Dorsolateral prefrontal cortex (tissue), 120 donors: ENCODE measurements at regions of chr1 and their contacts with region 1.

Region 1: GRCh38 chr1:229625915-229626831 is at the starts of genes TAF5L and URB2:
- DNase-seq: peak; percentile 75 to 96 (median 88)
- H3K4me3 ChIP-seq: peak within 1 kb of the TSS; percentile 74 to 100 (median 95)
- H3K27ac ChIP-seq: peak within 1 kb of the TSS in 57 of 59 donors; percentile 41 to 95 (median 87)
- H3K27me3 ChIP-seq: no peaks in the 10 kb centered on the region
- CTCF ChIP-seq: peak in 42 of 56 donors; percentile 13 to 56 (median 32)
- total RNA-seq, gene TAF5L: 12.1 to 22.9 (median 17.0) TPM
- total RNA-seq, gene URB2: 5.0 to 12.0 (median 8.2) TPM

Region 2: GRCh38 chr1:229507951-229508822 is 118.0 kb before region 1 on chr1 and contains the start of gene NUP133:
- intact Hi-C with region 1: loop called in 1 of 2 experiments (anchors 2 kb)
- DNase-seq: peak; percentile 96 to 99 (median 99)
- H3K4me3 ChIP-seq: peak within 1 kb of the TSS; percentile 75 to 100 (median 99)
- H3K27ac ChIP-seq: peak within 1 kb of the TSS; percentile 78 to 99 (median 95)
- H3K27me3 ChIP-seq: no peaks in the 10 kb centered on the region
- CTCF ChIP-seq: peak in 25 of 56 donors; percentile 6 to 49 (median 29)
- total RNA-seq, gene NUP133: 32.4 to 66.3 (median 46.5) TPM

Region 3: GRCh38 chr1:229579059-229579673 is 47.0 kb before region 1 on chr1:
- intact Hi-C with region 1: loop called (anchors 1 to 5 kb)
- DNase-seq: peak; percentile 41 to 94 (median 88)
- H3K4me3 ChIP-seq: peak overlapping the region in 57 of 59 donors; percentile 8 to 67 (median 42)
- H3K27ac ChIP-seq: peak overlapping the region; percentile 29 to 95 (median 87)
- H3K27me3 ChIP-seq: no peaks in the 10 kb centered on the region
- CTCF ChIP-seq: peak in 21 of 56 donors; percentile 2 to 49 (median 13)